ENCODE measurements at regions of chr18 and their contacts with region 1.

Region 1: GRCh38 chr18:44895176-44895798 is 214.6 kb downstream of the SETBP1 start:
- DNase-seq: peak; percentile 45
- ATAC-seq: no peak
- H3K4me3 ChIP-seq: no peak overlapping the region
- H3K27ac ChIP-seq: no peak overlapping the region
- H3K4me1 ChIP-seq: no peaks in the 10 kb centered on the region
- H3K27me3 ChIP-seq: no peaks in the 10 kb centered on the region
- CTCF ChIP-seq: peak; percentile 50
- POLR2A ChIP-seq: no peak
- RAD21 ChIP-seq: peak; percentile 60

Region 2: GRCh38 chr18:44130376-44130942 is 764.8 kb before region 1 on chr18:
- CTCF ChIA-PET with region 1: no interaction called
- POLR2A ChIA-PET with region 1: no interaction called
- dilution Hi-C with region 1: no loop called
- in situ Hi-C with region 1: loop called (anchors 25 kb)
- intact Hi-C with region 1: no loop called
- DNase-seq: peak; percentile 3
- ATAC-seq: no peak
- H3K4me3 ChIP-seq: no peak overlapping the region
- H3K27ac ChIP-seq: no peak overlapping the region
- H3K4me1 ChIP-seq: no peaks in the 10 kb centered on the region
- H3K27me3 ChIP-seq: no peaks in the 10 kb centered on the region
- CTCF ChIP-seq: peak; percentile 21
- POLR2A ChIP-seq: no peak
- RAD21 ChIP-seq: peak; percentile 39; the same call in 1 of the 2 replicates

Region 3: GRCh38 chr18:44156126-44156525 is 739.2 kb before region 1 on chr18:
- CTCF ChIA-PET with region 1: no interaction called
- POLR2A ChIA-PET with region 1: no interaction called
- dilution Hi-C with region 1: no loop called
- in situ Hi-C with region 1: no loop called
- intact Hi-C with region 1: loop called (anchors 10 kb)
- DNase-seq: no peak
- ATAC-seq: no peak
- H3K4me3 ChIP-seq: no peak overlapping the region
- H3K27ac ChIP-seq: no peak overlapping the region
- H3K4me1 ChIP-seq: no peaks in the 10 kb centered on the region
- H3K27me3 ChIP-seq: no peaks in the 10 kb centered on the region
- CTCF ChIP-seq: no peak
- POLR2A ChIP-seq: no peak
- RAD21 ChIP-seq: no peak

Region 4: DNA sequence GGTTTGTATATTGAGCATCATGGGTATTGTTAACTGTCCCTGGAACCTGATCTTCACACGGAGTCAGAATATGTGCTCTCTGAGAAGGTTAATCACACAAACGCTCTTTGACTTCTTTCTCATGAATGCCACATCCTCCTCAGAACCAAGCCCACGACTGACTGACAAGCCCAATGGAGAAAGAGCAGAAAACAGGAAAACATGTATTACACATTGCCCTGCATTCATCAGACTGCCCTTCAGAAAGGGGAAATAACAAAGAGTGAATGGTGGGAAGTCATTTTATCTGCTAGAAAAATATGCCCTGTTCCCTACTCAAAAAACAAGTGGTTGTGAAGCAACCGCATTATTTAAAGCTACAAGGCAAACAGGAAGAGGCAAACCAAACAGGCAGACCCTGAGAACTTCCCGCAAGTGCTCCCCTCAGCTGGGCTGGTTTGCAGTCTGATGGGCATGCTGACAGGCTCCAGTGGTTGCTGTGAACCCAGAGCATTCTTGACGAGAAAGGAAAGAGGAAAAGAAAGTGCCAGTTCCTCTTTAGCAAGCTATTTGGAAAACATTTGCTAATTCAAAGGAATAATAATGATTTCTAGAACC is 387.5 kb before region 1 on chr18:
- CTCF ChIA-PET with region 1: no interaction called
- POLR2A ChIA-PET with region 1: no interaction called
- dilution Hi-C with region 1: no loop called
- in situ Hi-C with region 1: no loop called
- intact Hi-C with region 1: no loop called
- DNase-seq: no peak
- ATAC-seq: no peak
- H3K4me3 ChIP-seq: no peak overlapping the region
- H3K27ac ChIP-seq: no peak overlapping the region
- H3K4me1 ChIP-seq: no peaks in the 10 kb centered on the region
- H3K27me3 ChIP-seq: no peaks in the 10 kb centered on the region
- CTCF ChIP-seq: no peak
- POLR2A ChIP-seq: no peak
- RAD21 ChIP-seq: no peak

Region 5: DNA sequence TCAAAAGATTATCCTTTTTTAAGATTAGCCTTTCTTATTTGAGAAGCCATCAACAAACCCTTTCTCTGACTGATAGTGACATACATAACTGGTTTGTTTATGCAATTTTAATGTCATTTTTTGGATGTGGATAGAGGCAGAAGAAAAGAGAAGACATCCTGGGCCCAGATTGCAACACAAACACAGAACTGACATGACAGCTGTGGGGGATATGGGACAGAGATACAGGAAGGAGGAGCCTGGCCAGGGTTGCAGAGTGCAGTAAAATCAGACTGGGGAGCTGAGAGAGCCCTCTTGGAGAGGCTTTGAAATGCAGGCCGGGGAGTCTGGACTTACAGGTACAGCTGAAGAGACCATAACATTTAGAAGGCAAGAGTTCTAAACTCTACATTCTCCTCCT is 995.3 kb after region 1 on chr18:
- CTCF ChIA-PET with region 1: no interaction called
- POLR2A ChIA-PET with region 1: no interaction called
- dilution Hi-C with region 1: no loop called
- in situ Hi-C with region 1: no loop called
- intact Hi-C with region 1: no loop called
- DNase-seq: no peak
- ATAC-seq: no peak
- H3K4me3 ChIP-seq: no peak overlapping the region
- H3K27ac ChIP-seq: no peak overlapping the region
- H3K4me1 ChIP-seq: 0 out of 2 replicates have a peak, but pooled peaks cover 2% of the 10 kb centered on the region
- H3K27me3 ChIP-seq: no peaks in the 10 kb centered on the region
- CTCF ChIP-seq: no peak
- POLR2A ChIP-seq: no peak
- RAD21 ChIP-seq: no peak

Measured in IMR-90 (cell line).